Sigmoid colon (tissue), 7 donors: ENCODE measurements at regions of chr10 and their contacts with region 1.

Region 1: DNA sequence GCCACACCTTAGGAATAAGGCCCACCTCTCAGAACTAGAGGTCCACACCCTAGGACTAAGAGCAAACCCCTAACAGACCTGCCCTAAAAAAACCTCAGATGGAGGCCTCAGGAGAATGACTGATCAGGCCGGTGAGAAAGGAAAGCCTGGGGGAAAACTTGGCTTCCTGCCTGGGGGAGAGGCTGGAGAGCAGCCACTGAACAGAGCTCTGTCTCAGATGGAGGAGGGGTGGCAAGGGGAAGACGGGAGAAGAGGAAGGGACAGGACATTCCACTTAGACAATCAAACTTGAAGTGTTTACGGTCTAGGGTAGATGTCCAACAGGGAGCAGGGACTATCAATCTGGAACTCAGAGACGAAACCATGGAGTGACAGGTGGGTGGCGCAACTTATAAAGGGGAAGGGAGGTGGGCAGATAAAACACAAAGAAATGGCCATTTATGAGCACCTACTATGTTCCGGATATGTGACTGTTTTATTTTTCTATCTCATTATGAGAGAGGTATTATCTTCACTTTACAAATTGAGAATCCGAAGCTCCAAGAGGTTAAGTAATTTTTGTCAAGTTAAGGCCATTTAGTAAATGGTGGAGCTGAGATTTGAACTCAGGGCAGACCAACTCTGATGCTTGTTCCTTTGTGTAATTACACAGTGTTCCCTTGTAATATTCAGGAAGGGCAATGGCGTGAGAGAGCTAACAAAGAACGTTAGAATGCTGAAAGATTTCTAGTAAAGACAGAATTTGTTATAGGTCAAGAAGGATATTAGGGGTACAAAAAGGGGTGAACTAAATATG is 82.6 kb downstream of the DNMBP start:
- DNase-seq: peak; percentile 74
- H3K4me3 ChIP-seq: peak overlapping the region in 1 of 4 donors; percentile 0
- H3K27ac ChIP-seq: peak overlapping the region; percentile 17 to 54 (median 48)
- H3K4me1 ChIP-seq: peaks cover 0 to 46% (median 37%) of the 10 kb centered on the region in 4 donors
- H3K27me3 ChIP-seq: no peaks in the 10 kb centered on the region
- CTCF ChIP-seq: no peak
- EP300 ChIP-seq: no peak
- POLR2A ChIP-seq: no peak

Region 2: DNA sequence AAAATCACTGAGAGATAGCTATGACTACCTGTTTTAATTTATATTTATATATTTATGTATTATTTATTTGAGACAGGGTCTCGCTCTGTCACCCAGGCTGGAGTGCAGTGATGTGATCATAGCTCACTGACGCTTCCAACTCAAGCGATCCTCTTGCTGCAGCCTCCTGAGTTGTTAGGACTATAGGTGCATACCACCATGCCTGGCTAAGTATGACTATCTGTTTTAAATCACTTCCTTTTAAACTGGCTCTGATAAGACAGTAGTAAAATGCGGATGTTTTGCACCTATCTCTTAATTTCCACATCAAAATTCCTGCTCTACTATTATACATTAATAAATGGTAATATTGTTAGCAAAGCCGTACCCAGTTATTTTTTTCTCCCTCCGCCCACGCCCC is 40.8 kb after region 1 on chr10:
- intact Hi-C with region 1: loop called (anchors 1 kb)
- DNase-seq: no peak
- H3K4me3 ChIP-seq: no peak overlapping the region
- H3K27ac ChIP-seq: no peak overlapping the region
- H3K4me1 ChIP-seq: peaks cover 0 to 5% (median 0%) of the 10 kb centered on the region in 4 donors
- H3K27me3 ChIP-seq: no peaks in the 10 kb centered on the region
- CTCF ChIP-seq: no peak
- EP300 ChIP-seq: no peak
- POLR2A ChIP-seq: no peak

Region 3: DNA sequence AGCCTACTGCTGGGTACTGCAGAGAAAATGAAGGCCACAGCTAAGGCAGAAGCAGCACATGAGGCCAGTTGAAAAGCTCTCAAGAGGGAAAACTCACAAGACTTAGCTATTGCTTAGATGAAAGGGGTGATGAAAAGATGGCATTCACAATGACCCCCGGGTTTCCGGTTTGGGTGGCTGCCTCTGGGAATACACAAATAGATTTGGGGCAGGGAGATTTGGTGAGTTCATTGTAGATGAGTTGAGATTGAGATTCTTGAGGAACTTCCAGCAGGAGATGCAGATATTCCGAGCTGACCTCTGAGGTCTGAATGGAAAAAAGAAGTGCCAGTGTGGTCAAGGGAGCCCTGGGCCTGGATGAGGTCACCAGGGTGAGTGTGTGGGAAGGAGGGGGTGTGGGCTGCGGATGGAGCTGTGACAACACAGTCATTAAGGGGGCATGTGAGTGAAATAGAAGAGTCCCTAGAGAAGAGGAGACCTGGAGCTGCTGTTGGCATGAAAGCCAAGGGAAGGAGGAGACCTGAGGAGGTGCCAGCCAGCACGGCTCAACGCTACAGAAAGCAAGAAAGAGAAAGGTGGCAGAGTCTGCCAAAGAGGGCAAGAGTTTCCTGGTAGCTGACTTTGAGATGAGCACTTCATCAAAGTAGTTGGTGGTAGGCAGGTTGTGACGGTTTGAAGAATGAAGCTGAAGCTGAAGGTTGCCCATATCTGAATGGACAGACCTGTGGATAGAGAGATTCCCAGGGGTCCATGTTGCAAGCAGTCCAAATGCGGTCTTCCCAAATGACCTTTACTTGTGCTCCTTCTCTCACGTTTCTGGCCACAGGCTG is 652.4 kb after region 1 on chr10:
- intact Hi-C with region 1: no loop called
- DNase-seq: no peak
- H3K4me3 ChIP-seq: no peak overlapping the region
- H3K27ac ChIP-seq: no peak overlapping the region
- H3K4me1 ChIP-seq: no peaks in the 10 kb centered on the region
- H3K27me3 ChIP-seq: peaks cover 0 to 13% (median 0%) of the 10 kb centered on the region in 3 donors
- CTCF ChIP-seq: no peak
- EP300 ChIP-seq: no peak
- POLR2A ChIP-seq: no peak